ENCODE measurements at regions of chr11 and their contacts with region 1.

Region 1: DNA sequence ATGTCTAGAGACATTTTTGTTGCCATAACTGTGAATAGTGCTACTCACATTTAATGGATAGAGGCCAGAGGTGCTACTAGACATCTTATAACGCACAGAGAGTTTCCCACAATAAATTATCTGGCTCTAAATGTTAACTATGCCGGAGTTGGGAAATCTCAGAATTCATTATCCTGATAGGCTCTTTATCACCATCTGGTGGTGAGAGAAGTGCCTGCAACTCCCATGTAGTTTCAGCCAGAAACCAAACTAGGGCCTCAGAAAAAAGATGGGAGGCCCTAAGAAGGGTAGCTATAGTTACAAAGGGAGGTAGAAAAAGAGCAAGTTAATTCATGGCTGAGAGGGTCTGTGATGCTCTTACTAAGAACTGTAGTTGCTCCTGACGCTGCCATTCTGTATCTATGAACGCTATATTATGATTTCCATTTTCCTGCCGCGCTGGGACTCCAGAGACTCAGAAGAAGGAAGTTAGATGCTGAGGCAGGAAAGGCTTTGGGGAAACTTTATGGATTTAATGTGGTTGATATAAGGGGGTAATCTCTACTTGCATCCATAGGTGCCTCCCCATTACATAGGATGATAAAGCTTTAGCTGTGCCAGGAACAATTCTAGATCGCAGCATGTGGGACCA is 22.9 kb upstream of the MRPL17 start:
- DNase-seq: peak; percentile 65
- H3K4me3 Mint-ChIP-seq: no peak overlapping the region
- H3K27ac Mint-ChIP-seq: no peak overlapping the region
- H3K4me1 Mint-ChIP-seq: no peaks in the 10 kb centered on the region
- H3K27me3 Mint-ChIP-seq: no peaks in the 10 kb centered on the region
- CTCF ChIP-seq: peak; percentile 82

Region 2: DNA sequence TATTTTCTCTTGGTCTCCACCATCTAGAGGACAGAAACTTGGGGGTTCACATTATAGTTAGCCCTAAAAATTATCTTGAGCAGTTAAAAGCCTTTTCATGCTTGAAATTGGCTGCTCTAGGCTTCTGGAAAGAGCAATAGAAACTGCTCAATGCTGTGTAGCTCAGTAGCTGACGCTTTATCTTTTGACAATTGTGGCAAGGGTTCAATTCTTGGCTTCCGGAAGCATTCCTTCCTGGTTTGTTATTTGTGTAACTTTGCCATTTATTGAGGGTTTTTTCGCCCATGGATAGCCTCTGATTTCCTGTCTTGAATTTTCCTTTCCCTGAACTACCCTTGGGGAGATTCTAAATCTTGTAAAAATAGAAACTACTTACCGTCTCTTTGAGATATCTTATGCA is 665.1 kb before region 1 on chr11:
- CTCF ChIA-PET with region 1: no interaction called
- POLR2A ChIA-PET with region 1: no interaction called
- intact Hi-C with region 1: no loop called
- DNase-seq: no peak
- H3K4me3 Mint-ChIP-seq: no peak overlapping the region
- H3K27ac Mint-ChIP-seq: no peak overlapping the region
- H3K4me1 Mint-ChIP-seq: no peaks in the 10 kb centered on the region
- H3K27me3 Mint-ChIP-seq: peaks cover 24% of the 10 kb centered on the region
- CTCF ChIP-seq: no peak

Region 3: DNA sequence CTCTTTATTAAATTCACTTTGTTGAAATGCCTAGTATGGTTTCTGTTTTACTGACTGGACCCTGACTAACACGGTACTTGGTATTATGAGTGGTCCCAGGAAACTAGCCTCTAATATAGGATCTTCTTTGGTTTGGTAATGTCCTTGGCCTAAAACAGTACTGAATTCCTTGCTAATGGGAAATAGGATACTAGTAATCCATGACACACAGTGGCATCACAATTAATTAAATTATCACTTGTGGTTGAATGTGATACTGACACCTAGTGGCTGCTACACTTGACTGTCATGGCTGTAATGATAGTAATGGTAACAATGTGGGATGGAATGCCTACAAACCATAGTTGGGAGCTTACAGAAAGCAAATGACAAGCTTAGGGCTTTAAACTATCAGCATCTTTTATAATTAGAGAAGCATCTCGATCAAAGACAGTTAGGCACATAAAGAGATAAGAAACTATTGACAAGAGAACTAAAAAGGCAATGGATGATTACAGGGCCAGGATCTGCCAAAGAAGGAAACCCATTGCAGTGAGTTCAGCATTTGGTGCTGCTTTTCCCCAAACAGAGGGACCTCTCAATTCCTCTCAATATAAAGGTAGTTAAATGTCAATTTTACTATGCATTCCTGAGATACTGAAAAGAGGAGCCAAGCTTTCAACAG is 200.3 kb before region 1 on chr11:
- CTCF ChIA-PET with region 1: interaction called, 13 read pairs
- POLR2A ChIA-PET with region 1: no interaction called
- intact Hi-C with region 1: no loop called
- DNase-seq: peak; percentile 64
- H3K4me3 Mint-ChIP-seq: no peak overlapping the region
- H3K27ac Mint-ChIP-seq: no peak overlapping the region
- H3K4me1 Mint-ChIP-seq: no peaks in the 10 kb centered on the region
- H3K27me3 Mint-ChIP-seq: no peaks in the 10 kb centered on the region
- CTCF ChIP-seq: peak; percentile 52

Region 4: DNA sequence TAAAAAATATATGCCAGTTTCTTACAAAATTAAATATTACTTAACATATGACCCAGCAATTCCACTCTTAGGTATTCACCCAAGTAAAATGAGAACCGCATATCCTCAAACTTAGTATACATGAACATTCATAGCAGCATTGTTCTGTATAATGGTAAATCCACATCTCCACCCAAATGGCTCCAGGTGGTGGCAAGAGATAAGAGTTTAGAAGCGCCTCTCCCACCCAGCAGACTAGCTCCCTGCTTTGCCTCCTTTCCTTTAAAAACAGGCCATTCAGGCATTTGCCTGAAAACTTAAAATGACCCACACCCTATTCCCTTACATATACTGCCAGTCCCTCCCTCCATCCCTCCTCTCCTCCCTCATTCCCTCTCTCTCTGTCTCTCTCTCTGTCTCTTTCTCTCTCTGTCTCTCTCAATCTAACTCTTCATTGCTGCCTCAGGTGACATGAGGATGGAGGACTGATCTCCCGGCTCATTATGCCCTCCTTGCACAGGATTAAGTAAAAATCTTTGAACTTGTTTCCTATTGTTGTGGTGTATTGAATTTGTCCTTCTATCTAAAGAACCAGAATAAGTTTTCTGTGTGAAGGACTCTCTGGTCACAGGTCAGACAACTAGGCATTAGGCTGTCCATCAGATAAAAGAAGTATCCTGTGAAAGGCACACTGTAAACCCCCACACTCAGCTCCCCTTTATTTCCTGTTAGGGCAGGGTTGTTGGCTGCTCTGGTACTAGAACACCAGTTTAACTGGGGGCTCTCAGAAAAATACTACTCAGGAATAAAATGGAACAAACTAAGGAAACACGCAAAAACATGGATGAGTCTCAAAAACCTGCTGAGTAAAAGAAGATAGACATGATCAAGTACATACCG is 151.0 kb before region 1 on chr11:
- CTCF ChIA-PET with region 1: no interaction called
- POLR2A ChIA-PET with region 1: no interaction called
- intact Hi-C with region 1: no loop called
- DNase-seq: no peak
- H3K4me3 Mint-ChIP-seq: no peak overlapping the region
- H3K27ac Mint-ChIP-seq: no peak overlapping the region
- H3K4me1 Mint-ChIP-seq: no peaks in the 10 kb centered on the region
- H3K27me3 Mint-ChIP-seq: no peaks in the 10 kb centered on the region
- CTCF ChIP-seq: no peak

Region 5: GRCh38 chr11:6619004-6619745 is 86.8 kb before region 1 on chr11 and contains the start of gene TPP1:
- CTCF ChIA-PET with region 1: interaction called, 6 read pairs
- POLR2A ChIA-PET with region 1: no interaction called
- intact Hi-C with region 1: loop called (anchors 2 kb)
- DNase-seq: peak; percentile 96
- H3K4me3 Mint-ChIP-seq: no peak within 1 kb of the TSS
- H3K27ac Mint-ChIP-seq: no peak within 1 kb of the TSS
- H3K4me1 Mint-ChIP-seq: no peaks in the 10 kb centered on the region
- H3K27me3 Mint-ChIP-seq: no peaks in the 10 kb centered on the region
- CTCF ChIP-seq: no peak
- total RNA-seq, gene TPP1: 26.9 and 46.5 TPM in 2 replicates

Region 6: DNA sequence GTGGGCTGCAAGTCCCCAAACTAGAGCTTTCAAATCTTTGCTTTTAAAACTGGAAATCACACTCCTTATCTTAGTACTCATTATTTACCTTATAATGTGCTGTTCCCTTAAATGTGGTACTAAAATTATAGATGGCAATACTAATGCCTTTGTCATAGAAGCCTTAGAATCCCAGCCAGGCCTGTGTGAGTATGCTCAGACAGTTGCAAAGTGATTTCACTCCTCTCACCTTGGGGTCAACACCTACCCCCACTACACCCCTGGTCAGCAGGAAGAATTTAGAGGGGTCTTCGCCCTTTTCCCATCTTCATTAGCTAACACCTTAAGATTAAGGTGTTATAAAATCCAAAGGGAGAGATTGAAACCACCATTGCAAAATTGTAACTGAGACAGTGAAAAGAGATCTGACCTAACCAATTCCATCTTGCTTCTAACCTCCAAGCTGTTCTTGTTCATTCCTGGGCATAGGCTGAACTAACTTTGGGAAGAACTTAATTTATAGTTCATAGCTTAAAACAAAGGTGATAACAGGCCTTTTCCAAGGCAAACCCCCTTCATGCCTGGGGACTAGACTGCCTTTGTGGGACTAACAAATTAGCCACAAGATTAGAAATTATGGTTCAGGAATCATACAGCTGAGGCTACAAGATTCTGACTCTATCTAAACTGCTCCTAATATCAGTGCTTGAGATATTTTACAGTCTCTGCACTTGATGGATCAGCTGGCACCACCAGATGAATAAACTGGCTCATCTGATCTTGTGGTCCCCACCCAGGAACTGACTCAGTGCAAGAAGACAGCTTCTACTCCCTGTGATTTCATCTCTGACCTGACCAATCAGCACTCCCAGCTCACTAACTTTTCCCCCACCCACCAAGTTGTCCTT is 12.4 kb before region 1 on chr11:
- CTCF ChIA-PET with region 1: interaction called, 28 read pairs
- POLR2A ChIA-PET with region 1: interaction called, 3 read pairs
- intact Hi-C with region 1: no loop called
- DNase-seq: peak; percentile 61
- H3K4me3 Mint-ChIP-seq: no peak overlapping the region
- H3K27ac Mint-ChIP-seq: peak overlapping the region; percentile 64
- H3K4me1 Mint-ChIP-seq: peaks cover 16% of the 10 kb centered on the region
- H3K27me3 Mint-ChIP-seq: no peaks in the 10 kb centered on the region
- CTCF ChIP-seq: no peak

Region 7: GRCh38 chr11:6757373-6757967 is 51.5 kb after region 1 on chr11:
- CTCF ChIA-PET with region 1: interaction called, 17 read pairs
- POLR2A ChIA-PET with region 1: no interaction called
- intact Hi-C with region 1: loop called (anchors 1 kb)
- DNase-seq: peak; percentile 55
- H3K4me3 Mint-ChIP-seq: no peak overlapping the region
- H3K27ac Mint-ChIP-seq: no peak overlapping the region
- H3K4me1 Mint-ChIP-seq: no peaks in the 10 kb centered on the region
- H3K27me3 Mint-ChIP-seq: no peaks in the 10 kb centered on the region
- CTCF ChIP-seq: peak; percentile 49